HepG2 (cell line): ENCODE measurements at regions of chr5 and their contacts with region 1.

Region 1: DNA sequence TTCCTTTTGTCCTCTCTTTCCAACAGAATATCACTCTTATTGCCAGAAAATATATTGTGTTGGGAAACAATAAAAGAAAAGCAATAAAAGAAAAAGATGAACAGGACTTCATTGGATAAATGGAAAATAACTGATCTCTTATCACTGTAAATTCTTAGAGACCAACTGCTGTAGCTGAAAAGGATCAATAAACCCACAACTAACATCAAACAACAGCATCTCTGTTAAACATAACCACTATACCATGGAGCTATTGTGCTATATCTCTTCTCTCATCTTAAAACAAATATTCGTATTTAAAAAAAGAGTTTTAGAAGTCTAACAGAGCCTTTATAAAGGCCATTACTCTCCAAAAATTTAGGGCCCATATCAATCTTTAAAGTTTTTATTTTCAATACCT is 502.4 kb downstream of the TMEM232 start:
- DNase-seq: peak; percentile 10
- ATAC-seq: peak; percentile 83
- H3K4me3 ChIP-seq: no peak overlapping the region
- H3K27ac ChIP-seq: no peak overlapping the region
- H3K4me1 ChIP-seq: peaks cover 22% of the 10 kb centered on the region
- H3K27me3 ChIP-seq: no peaks in the 10 kb centered on the region; a peak in 1 of 5 replicates
- CTCF ChIP-seq: no peak
- EP300 ChIP-seq: peak in 1 of 2 experiments; percentile 72; a peak in 2 of 4 replicates
- POLR2A ChIP-seq: no peak
- RAD21 ChIP-seq: no peak

Region 2: GRCh38 chr5:110105692-110106091 is 118.4 kb before region 1 on chr5:
- CTCF ChIA-PET with region 1: no interaction called
- POLR2A ChIA-PET with region 1: no interaction called
- in situ Hi-C with region 1: no loop called
- intact Hi-C with region 1: loop called (anchors 2 kb)
- DNase-seq: peak; percentile 79
- ATAC-seq: peak; percentile 63
- H3K4me3 ChIP-seq: no peak overlapping the region; a peak in 1 of 6 replicates
- H3K27ac ChIP-seq: no peak overlapping the region
- H3K4me1 ChIP-seq: peaks cover 65% of the 10 kb centered on the region
- H3K27me3 ChIP-seq: no peaks in the 10 kb centered on the region
- CTCF ChIP-seq: no peak
- EP300 ChIP-seq: no peak; a peak in 1 of 4 replicates
- POLR2A ChIP-seq: no peak
- RAD21 ChIP-seq: no peak

Region 3: GRCh38 chr5:110179321-110179720 is 44.7 kb before region 1 on chr5:
- CTCF ChIA-PET with region 1: no interaction called
- POLR2A ChIA-PET with region 1: no interaction called
- in situ Hi-C with region 1: no loop called
- intact Hi-C with region 1: no loop called
- DNase-seq: no peak
- ATAC-seq: no peak
- H3K4me3 ChIP-seq: no peak overlapping the region
- H3K27ac ChIP-seq: no peak overlapping the region
- H3K4me1 ChIP-seq: no peaks in the 10 kb centered on the region
- H3K27me3 ChIP-seq: no peaks in the 10 kb centered on the region
- CTCF ChIP-seq: no peak
- EP300 ChIP-seq: no peak
- POLR2A ChIP-seq: no peak
- RAD21 ChIP-seq: no peak